OCI-LY7 (cell line): ENCODE measurements at regions of chr2 and their contacts with region 1.

Region 1: GRCh38 chr2:190880378-190881073 is at the start of gene GLS:
- DNase-seq: peak; percentile 96
- H3K4me3 ChIP-seq: peak within 1 kb of the TSS; percentile 84
- H3K27ac ChIP-seq: peak within 1 kb of the TSS; percentile 87
- H3K4me1 ChIP-seq: peaks cover 28% of the 10 kb centered on the region
- CTCF ChIP-seq: no peak
- total RNA-seq, gene GLS: 82.0 and 102 TPM in 2 replicates

Region 2: GRCh38 chr2:190408538-190409271 is 471.8 kb before region 1 on chr2:
- CTCF ChIA-PET with region 1: no interaction called
- POLR2A ChIA-PET with region 1: no interaction called
- intact Hi-C with region 1: loop called (anchors 5 kb)
- DNase-seq: peak; percentile 65
- H3K4me3 ChIP-seq: peak overlapping the region; percentile 84
- H3K27ac ChIP-seq: peak overlapping the region; percentile 46
- H3K4me1 ChIP-seq: peaks cover 16% of the 10 kb centered on the region
- CTCF ChIP-seq: no peak

Region 3: GRCh38 chr2:190835303-190835930 is 45.1 kb before region 1 on chr2:
- CTCF ChIA-PET with region 1: no interaction called
- POLR2A ChIA-PET with region 1: no interaction called
- intact Hi-C with region 1: no loop called
- DNase-seq: no peak
- H3K4me3 ChIP-seq: no peak overlapping the region
- H3K27ac ChIP-seq: no peak overlapping the region
- H3K4me1 ChIP-seq: no peaks in the 10 kb centered on the region
- CTCF ChIP-seq: no peak

Region 4: DNA sequence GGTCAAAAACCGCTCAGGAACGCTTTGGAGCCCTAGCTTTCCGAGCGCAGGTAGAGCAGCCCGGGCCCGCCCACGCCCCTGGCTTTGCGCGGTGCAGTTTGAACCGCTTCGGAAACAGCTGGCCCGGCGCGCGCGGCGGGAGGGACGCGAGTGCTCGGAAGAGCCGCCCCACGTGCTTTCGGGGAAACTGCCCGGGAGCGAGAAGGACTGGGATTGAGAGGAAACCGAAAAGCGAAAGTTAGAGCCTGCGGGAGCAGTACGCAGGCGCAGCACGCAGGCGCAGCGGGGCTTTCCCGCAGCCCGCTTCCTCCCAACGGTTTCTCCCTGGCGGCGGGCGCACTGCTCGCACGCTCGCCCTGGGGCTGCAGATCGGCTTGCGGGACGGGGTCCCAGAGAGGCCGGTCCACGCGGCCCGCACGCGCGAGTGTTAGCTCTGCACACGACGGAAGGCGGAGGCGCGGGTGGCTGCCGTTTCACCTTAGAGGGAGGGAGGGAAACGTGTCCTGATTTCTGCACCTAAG is 139.8 kb after region 1 on chr2:
- CTCF ChIA-PET with region 1: no interaction called
- POLR2A ChIA-PET with region 1: interaction called, 4 read pairs
- intact Hi-C with region 1: loop called (anchors 2 kb)
- DNase-seq: peak; percentile 92
- H3K4me3 ChIP-seq: peak overlapping the region; percentile 69
- H3K27ac ChIP-seq: peak overlapping the region; percentile 35
- H3K4me1 ChIP-seq: peaks cover 16% of the 10 kb centered on the region
- CTCF ChIP-seq: no peak